Psoas muscle (tissue), 8 donors: ENCODE measurements at regions of chr2 and their contacts with region 1.

Region 1: GRCh38 chr2:135473567-135473966 is 57.5 kb downstream of the ZRANB3 start:
- DNase-seq: no peak
- ATAC-seq: peak; percentile 83 to 98 (median 89)
- H3K4me3 ChIP-seq: no peak overlapping the region
- H3K27ac ChIP-seq: no peak overlapping the region
- H3K4me1 ChIP-seq: no peaks in the 10 kb centered on the region
- H3K27me3 ChIP-seq: no peaks in the 10 kb centered on the region
- CTCF ChIP-seq: peak; percentile 62

Region 2: DNA sequence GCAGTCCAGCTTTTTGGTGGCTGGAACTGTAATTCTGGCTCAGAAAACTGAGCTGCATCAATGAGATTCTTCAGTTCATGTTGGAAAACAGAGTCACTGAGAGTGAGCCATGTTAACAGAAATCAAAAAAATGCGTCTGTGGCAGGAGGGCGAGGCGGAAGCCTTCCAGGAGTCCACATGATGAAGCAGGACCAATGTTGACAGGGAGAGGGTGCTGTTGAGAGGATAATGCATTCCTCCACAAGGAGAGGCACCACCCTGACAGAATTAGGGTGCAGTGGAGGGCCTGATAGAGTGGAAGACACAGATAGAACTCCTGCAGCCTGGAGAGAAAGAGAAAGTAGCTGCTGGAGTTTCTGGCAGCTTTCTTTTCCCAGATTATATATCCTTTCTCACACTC is 1108.2 kb before region 1 on chr2:
- intact Hi-C with region 1: no loop called
- DNase-seq: no peak
- ATAC-seq: no peak
- H3K4me3 ChIP-seq: no peak overlapping the region
- H3K27ac ChIP-seq: no peak overlapping the region
- H3K4me1 ChIP-seq: peaks cover 46% of the 10 kb centered on the region
- H3K27me3 ChIP-seq: no peaks in the 10 kb centered on the region
- CTCF ChIP-seq: no peak

Region 3: GRCh38 chr2:135590619-135591260 is 117.2 kb after region 1 on chr2:
- intact Hi-C with region 1: loop called in 1 of 2 experiments (anchors 10 kb)
- DNase-seq: no peak
- ATAC-seq: no peak
- H3K4me3 ChIP-seq: no peak overlapping the region
- H3K27ac ChIP-seq: no peak overlapping the region
- H3K4me1 ChIP-seq: peaks cover 6% of the 10 kb centered on the region
- H3K27me3 ChIP-seq: no peaks in the 10 kb centered on the region
- CTCF ChIP-seq: no peak

Region 4: DNA sequence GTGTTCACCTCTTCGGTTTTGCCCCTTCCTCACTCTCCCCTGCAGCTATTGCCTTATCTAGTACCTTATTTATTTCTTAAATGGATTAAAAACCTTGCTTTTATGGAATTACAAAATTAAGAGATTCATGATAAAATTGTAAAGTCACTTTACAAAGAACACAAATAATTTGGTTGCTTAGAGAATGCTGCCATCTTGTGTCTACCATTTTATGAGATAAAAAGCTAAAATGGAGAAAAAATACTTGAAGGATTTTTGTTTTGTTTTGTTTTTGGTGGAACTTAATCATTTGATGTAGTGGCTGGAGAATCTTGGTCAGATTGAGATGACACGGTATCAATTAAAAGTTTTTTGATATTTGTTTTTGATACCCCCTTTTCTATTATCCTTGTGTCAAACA is 127.3 kb after region 1 on chr2:
- intact Hi-C with region 1: loop called (anchors 5 to 10 kb)
- DNase-seq: no peak
- ATAC-seq: no peak
- H3K4me3 ChIP-seq: no peak overlapping the region
- H3K27ac ChIP-seq: no peak overlapping the region
- H3K4me1 ChIP-seq: peaks cover 4% of the 10 kb centered on the region
- H3K27me3 ChIP-seq: no peaks in the 10 kb centered on the region
- CTCF ChIP-seq: peak; percentile 26

Region 5: GRCh38 chr2:135709992-135710391 is 236.4 kb after region 1 on chr2:
- intact Hi-C with region 1: loop called (anchors 5 kb)
- DNase-seq: peak; percentile 50 to 70
- ATAC-seq: peak in 3 of 4 donors; percentile 57 to 86 (median 68)
- H3K4me3 ChIP-seq: no peak overlapping the region
- H3K27ac ChIP-seq: no peak overlapping the region
- H3K4me1 ChIP-seq: peaks cover 5% of the 10 kb centered on the region
- H3K27me3 ChIP-seq: no peaks in the 10 kb centered on the region
- CTCF ChIP-seq: peak; percentile 94